Panc1 (cell line): ENCODE measurements at regions of chrX and their contacts with region 1.

Region 1: DNA sequence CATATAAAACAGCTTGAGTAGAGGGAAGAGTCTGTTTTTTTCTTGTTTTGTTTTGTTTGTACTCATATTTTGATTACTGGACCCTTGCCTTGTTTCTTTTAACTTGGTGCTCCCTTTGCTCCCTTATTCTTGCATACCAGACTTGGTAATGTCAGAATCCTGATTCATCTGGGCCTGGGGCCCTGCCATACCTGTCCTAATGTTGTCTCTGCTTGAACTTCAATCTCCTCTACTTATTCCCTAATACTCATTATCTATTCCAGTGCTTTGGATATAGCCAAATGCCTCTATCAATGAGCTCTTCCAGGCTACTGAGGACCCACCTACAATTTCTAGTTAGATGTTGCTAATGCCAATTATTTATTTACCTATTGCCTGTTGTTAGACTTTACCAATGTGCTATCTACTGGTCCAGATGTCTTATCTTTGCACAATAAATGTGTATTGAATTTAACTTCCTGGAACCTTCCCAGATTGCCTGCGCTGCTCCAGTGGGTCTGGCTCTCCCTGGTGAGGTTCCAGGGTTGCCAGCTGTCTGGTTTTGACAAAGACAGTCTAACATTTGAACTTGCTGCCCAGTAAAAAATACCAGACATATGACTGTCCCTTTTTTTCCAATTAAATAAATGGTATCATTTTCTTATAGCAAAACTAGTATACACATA is 64.4 kb upstream of the ACSL4 start:
- DNase-seq: no peak
- ATAC-seq: no peak
- H3K4me3 ChIP-seq: no peak overlapping the region
- H3K27ac ChIP-seq: no peak overlapping the region
- H3K4me1 ChIP-seq: no peaks in the 10 kb centered on the region
- H3K27me3 ChIP-seq: no peaks in the 10 kb centered on the region
- CTCF ChIP-seq: no peak

Region 2: GRCh38 chrX:109672239-109672638 is 125.2 kb before region 1 on chrX:
- CTCF ChIA-PET with region 1: no interaction called
- POLR2A ChIA-PET with region 1: no interaction called
- in situ Hi-C with region 1: no loop called
- intact Hi-C with region 1: no loop called
- DNase-seq: no peak
- ATAC-seq: no peak
- H3K4me3 ChIP-seq: no peak overlapping the region
- H3K27ac ChIP-seq: no peak overlapping the region
- H3K4me1 ChIP-seq: no peaks in the 10 kb centered on the region
- H3K27me3 ChIP-seq: no peaks in the 10 kb centered on the region
- CTCF ChIP-seq: no peak

Region 3: DNA sequence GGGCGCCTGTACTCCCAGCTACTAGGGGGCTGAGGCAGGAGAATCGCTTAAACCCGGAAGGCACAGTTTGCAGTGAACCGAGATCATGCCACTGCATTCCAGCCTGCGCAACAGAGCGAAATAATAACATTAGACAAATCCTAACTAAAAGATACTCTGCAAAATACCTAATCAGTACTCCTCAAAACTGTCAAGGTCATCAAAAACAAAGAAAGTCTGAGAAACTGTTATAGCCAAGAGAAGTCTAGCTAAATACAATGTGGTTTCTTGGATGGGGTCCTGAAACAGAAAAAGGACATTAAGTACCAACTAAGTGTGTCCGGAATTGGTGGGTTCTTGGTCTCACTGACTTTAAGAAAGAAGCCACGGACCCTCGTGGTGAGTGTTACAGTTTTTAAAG is 49.8 kb before region 1 on chrX:
- CTCF ChIA-PET with region 1: no interaction called
- POLR2A ChIA-PET with region 1: no interaction called
- in situ Hi-C with region 1: no loop called
- intact Hi-C with region 1: no loop called
- DNase-seq: no peak
- ATAC-seq: no peak
- H3K4me3 ChIP-seq: no peak overlapping the region
- H3K27ac ChIP-seq: no peak overlapping the region
- H3K4me1 ChIP-seq: no peaks in the 10 kb centered on the region
- H3K27me3 ChIP-seq: no peaks in the 10 kb centered on the region
- CTCF ChIP-seq: no peak

Region 4: DNA sequence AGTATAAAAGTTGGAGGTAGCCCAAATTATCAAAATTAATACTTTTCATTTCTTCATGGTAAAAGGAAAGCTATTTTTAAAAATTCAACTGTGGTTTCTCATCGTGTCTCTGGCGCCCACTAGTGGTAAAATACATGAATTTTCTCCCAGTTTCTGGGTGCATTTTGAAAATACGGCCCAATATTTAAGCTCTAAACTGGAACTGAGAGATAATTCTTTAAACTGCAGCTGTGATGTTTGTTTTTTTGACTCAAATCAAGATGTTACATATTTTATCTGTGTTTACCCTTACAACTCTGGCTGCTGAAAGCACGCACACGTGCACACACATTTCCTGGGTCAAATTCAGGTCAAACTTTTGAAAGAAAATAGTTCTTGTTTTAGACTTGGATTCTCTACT is 59.5 kb after region 1 on chrX:
- CTCF ChIA-PET with region 1: interaction called, 3 read pairs
- POLR2A ChIA-PET with region 1: no interaction called
- in situ Hi-C with region 1: no loop called
- intact Hi-C with region 1: loop called (anchors 2 kb)
- DNase-seq: no peak
- ATAC-seq: no peak
- H3K4me3 ChIP-seq: no peak overlapping the region
- H3K27ac ChIP-seq: no peak overlapping the region
- H3K4me1 ChIP-seq: no peaks in the 10 kb centered on the region
- H3K27me3 ChIP-seq: no peaks in the 10 kb centered on the region
- CTCF ChIP-seq: peak; percentile 84

Region 5: GRCh38 chrX:110204986-110205385 is 407.5 kb after region 1 on chrX:
- CTCF ChIA-PET with region 1: no interaction called
- POLR2A ChIA-PET with region 1: no interaction called
- in situ Hi-C with region 1: no loop called
- intact Hi-C with region 1: no loop called
- DNase-seq: no peak
- ATAC-seq: no peak
- H3K4me3 ChIP-seq: no peak overlapping the region
- H3K27ac ChIP-seq: no peak overlapping the region
- H3K4me1 ChIP-seq: no peaks in the 10 kb centered on the region
- H3K27me3 ChIP-seq: no peaks in the 10 kb centered on the region
- CTCF ChIP-seq: no peak